Heart right ventricle (tissue), 16 donors: ENCODE measurements at regions of chr11 and their contacts with region 1.

Region 1: GRCh38 chr11:93921695-93922468 is 71.5 kb upstream of the VSTM5 start:
- DNase-seq: peak in 1 of 2 donors; percentile 26
- ATAC-seq: peak in 2 of 8 donors; percentile 43 to 58
- H3K4me3 ChIP-seq: no peak overlapping the region
- H3K27ac ChIP-seq: no peak overlapping the region
- H3K4me1 ChIP-seq: no peaks in the 10 kb centered on the region
- H3K27me3 ChIP-seq: peaks cover 0 to 11% (median 6%) of the 10 kb centered on the region in 7 donors
- CTCF ChIP-seq: peak in 8 of 9 donors; percentile 30 to 70 (median 62)

Region 2: GRCh38 chr11:94011478-94011877 is 89.6 kb after region 1 on chr11:
- intact Hi-C with region 1: no loop called
- DNase-seq: no peak
- ATAC-seq: no peak
- H3K4me3 ChIP-seq: no peak overlapping the region
- H3K27ac ChIP-seq: no peak overlapping the region
- H3K4me1 ChIP-seq: no peaks in the 10 kb centered on the region
- H3K27me3 ChIP-seq: peaks cover 0 to 7% (median 0%) of the 10 kb centered on the region in 7 donors
- CTCF ChIP-seq: no peak

Region 3: DNA sequence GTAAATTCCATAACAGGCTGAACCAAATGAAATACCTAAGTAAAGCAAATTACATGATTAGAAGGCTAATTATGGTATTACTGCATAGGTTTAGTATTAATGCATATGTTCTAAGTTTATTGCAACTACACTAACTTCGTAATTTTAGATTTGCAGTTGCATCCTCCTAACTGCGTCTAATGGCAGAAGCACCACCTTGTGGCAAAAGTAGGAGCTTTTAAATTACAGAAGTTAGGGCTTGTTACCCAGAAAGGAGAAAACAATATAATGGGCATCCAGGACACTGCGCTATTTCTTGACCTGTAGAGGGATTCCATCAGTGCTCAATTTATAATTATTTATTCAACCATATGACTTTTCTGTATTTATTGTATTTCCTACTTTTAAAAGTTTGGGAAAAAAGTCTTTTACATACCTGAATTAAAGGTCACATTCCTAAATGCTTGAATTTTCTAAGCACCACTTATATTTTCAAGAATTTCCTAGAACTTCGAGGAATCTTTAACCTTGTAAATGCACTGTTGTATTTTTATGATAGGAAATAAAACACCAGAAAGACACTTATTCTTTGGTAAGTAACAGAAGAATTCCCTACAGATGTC is 495.6 kb after region 1 on chr11:
- intact Hi-C with region 1: loop called in 7 of 10 experiments (anchors 2 to 10 kb)
- DNase-seq: no peak
- ATAC-seq: peak in 2 of 8 donors; percentile 47 to 50
- H3K4me3 ChIP-seq: no peak overlapping the region
- H3K27ac ChIP-seq: no peak overlapping the region
- H3K4me1 ChIP-seq: no peaks in the 10 kb centered on the region
- H3K27me3 ChIP-seq: no peaks in the 10 kb centered on the region
- CTCF ChIP-seq: peak; percentile 13 to 70 (median 58)